Motor neuron (in vitro differentiated cells): ENCODE measurements at regions of chr2 and their contacts with region 1.

Region 1: DNA sequence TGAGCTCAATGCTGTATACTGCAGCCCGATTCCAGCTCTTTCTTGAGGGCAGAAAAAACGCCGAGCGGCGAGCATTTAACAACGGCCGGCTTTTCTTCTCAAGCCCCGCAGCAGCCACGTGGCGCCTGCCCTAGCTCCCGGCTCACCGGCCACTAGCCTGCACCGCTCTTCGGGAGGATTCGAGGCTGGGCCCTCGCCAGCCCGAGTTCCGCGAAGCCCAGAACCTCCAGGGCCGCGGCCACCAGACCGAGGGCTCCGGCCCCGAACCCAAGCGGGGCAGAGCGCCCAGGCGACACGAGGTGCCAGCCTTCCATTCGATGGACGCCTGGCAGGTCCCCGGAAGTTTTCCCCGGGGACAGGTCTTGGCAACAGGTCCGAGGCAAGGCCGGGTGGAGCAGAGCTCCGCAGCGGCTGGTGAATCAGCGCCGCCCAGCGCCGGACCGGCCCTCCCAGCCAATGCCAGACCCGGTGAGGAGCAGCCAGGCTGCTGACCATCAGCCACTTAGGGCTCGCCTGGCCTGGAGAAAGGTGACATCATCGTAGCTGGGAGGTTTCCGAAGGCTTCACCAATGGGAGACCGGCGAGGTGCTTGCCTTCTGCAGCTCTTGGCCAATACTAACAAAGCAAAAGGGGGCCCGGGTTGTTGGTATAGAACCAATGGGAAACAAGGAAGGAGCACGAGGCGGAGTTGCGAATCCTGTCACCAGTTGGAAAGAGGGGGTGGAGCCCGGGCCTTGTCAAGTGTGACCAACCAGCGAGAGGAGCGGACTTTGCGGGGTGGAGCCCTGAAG is 544 bp upstream of the MXD1 start:
- ATAC-seq: peak; percentile 86 to 91 (median 88)
- H3K4me3 ChIP-seq: peak overlapping the region; percentile 46 to 60 (median 53)
- H3K27ac ChIP-seq: peak overlapping the region; percentile 89 to 96
- H3K4me1 ChIP-seq: peaks cover 8% of the 10 kb centered on the region in 2 donors

Region 2: DNA sequence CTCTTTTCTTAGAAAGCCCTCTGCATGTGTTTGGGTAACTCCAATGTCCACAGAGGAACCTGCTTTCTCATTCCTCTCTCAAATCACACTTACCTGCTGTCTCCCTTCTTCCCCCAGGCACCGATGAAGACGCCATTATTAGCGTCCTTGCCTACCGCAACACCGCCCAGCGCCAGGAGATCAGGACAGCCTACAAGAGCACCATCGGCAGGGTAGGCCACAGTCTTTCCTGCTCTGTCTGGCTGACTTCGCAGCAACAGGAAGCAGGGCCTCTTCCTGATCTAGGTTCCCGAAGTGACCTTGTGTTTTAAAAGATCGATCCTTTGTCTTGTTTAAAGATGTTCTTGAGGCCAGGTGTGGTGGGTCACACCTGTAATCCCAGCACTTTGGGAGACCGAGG is 109.9 kb before region 1 on chr2:
- in situ Hi-C with region 1: no loop called
- ATAC-seq: no peak
- H3K4me3 ChIP-seq: no peak overlapping the region
- H3K27ac ChIP-seq: no peak overlapping the region
- H3K4me1 ChIP-seq: peaks cover under 1 to 2% of the 10 kb centered on the region in 2 donors

Region 3: DNA sequence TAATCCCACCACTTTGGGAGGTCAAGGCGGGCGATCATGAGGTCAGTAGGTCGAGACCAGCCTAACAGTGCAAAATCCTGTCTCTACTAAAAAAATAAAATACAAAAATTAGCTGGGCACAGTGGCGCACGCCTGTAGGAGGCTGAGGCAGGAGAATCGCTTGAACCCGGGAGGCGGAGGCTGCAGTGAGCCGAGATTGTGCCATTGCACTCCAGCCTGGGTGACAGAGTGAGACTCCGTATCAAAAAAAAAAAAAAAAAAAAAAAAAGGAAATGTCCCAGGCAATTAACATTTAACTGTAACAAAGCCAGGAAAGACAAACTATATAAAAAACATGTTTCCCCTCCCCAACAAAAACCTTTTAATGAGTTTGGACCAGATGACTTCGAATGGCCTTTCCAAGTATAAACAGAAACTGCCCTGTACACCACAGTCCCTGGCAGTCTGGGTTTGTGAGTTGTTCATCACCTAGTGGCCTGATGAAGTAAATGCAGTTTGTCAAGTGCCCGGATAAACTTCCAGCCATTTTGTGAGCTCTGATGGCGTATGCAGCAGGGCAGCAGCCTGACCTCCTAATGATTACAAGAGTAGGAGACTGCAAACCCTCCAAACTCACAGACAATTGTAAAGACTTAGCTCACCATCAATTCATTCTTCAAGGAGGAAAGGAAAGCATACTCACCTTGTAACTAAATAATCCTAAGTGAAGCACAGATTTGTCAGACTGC is 156.3 kb after region 1 on chr2:
- in situ Hi-C with region 1: loop called in 1 of 9 experiments (anchors 25 kb)
- ATAC-seq: peak; percentile 96 to 100 (median 99)
- H3K4me3 ChIP-seq: no peak overlapping the region
- H3K27ac ChIP-seq: peak overlapping the region; percentile 57 to 81
- H3K4me1 ChIP-seq: peaks cover 0 to 10% of the 10 kb centered on the region in 2 donors

Region 4: GRCh38 chr2:70142590-70143313 is 228.4 kb after region 1 on chr2:
- in situ Hi-C with region 1: loop called in 1 of 9 experiments (anchors 25 kb)
- ATAC-seq: peak; percentile 60 to 78 (median 65)
- H3K4me3 ChIP-seq: peak overlapping the region; percentile 36 to 47 (median 44)
- H3K27ac ChIP-seq: peak overlapping the region; percentile 95 to 96
- H3K4me1 ChIP-seq: peaks cover 21 to 24% of the 10 kb centered on the region in 2 donors

Region 5: DNA sequence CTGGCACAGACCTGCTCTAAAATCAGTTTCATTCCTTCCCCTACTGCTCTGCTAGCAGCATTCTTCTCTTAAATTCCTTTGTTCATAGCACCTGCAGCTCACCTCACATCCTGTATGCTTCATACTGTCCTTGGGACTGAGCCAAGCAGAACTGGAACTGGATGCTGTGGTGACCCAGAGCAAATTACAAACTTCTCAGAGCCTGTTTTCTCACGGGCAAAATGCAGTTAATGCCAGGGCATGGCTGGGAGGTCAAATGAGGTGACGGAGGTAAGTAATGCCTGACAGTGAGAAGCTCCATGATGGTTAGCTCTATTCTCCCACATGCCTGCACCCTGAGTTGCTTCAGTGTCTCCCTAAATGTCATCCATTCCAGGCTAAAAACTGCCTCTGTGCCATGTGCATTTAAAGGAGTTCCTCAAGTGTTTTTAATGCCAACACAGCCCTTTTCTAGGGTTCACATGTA is 246.7 kb after region 1 on chr2:
- in situ Hi-C with region 1: loop called in 2 of 9 experiments (anchors 25 kb)
- ATAC-seq: no peak
- H3K4me3 ChIP-seq: no peak overlapping the region
- H3K27ac ChIP-seq: no peak overlapping the region
- H3K4me1 ChIP-seq: no peaks in the 10 kb centered on the region

Region 6: DNA sequence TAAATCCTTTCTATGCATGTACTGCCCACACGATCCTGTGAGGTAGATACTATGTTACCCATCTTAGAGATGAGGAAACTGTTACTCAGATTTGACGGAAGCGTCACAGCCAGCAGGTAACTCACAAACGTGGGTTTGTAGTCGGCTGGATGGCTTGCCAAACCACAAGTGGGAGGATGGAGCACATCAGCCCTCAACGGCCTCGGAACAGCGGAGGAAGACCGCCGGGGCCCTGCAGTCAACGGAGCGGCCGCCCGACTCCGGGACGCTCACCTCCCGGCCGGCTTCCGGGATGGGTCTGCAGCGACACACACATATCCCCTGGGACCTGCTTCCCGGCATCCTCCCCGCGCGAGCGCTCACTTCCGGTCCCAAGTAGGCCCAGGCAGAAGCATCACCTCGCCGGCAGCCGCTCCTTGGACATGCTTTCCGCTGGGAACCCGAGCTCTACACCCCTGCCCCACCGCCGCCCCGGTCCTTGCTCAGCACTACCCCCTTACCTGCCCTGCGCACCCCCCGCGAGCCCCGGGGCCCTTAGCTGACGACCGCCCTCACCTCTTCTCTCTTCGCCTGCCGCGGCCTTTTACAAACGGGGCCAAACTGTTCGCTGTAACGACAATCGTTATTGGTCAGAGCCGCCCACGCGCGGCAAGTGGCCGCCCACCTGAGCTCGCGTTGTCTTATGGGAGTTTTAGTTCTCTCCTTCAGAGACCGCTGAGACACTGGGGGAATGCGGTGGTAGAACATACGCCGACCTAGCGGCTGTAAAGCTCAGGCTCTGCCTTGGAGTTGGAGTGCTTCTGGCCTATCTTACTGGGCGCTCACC is 276.3 kb after region 1 on chr2 and contains the start of gene C2orf42:
- in situ Hi-C with region 1: loop called in 1 of 9 experiments (anchors 25 kb)
- ATAC-seq: peak; percentile 92 to 97 (median 96)
- H3K4me3 ChIP-seq: peak within 1 kb of the TSS; percentile 67 to 82 (median 76)
- H3K27ac ChIP-seq: peak within 1 kb of the TSS; percentile 99
- H3K4me1 ChIP-seq: no peaks in the 10 kb centered on the region
- total RNA-seq, gene C2orf42: 9.8 to 18.7 (median 14.5) TPM

Region 7: DNA sequence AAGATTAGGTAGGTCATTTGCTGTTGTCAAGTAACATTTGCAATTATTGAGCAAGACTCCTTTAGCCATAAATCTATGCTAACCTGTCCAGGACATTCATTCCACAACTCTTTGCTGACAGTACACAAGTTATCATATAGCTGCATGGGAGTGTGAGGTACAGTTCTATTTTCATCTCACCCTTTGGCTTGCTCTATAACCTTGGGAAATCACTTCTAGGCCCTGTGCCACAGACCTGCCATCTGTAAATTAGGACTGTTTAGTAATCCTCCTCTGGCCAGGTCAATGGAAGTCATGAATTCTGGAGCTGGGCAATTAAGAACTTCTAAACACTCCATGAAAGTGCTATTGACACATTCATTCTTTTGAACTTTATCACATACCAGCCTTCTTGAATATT is 1347.2 kb after region 1 on chr2:
- in situ Hi-C with region 1: no loop called
- ATAC-seq: no peak
- H3K4me3 ChIP-seq: no peak overlapping the region
- H3K27ac ChIP-seq: no peak overlapping the region
- H3K4me1 ChIP-seq: no peaks in the 10 kb centered on the region